Activated CD8-positive, alpha-beta T cell treated with anti-CD3 and anti-CD28 coated beads for 36 hours (primary cell): ENCODE measurements at regions of chr2 and their contacts with region 1.

Region 1: DNA sequence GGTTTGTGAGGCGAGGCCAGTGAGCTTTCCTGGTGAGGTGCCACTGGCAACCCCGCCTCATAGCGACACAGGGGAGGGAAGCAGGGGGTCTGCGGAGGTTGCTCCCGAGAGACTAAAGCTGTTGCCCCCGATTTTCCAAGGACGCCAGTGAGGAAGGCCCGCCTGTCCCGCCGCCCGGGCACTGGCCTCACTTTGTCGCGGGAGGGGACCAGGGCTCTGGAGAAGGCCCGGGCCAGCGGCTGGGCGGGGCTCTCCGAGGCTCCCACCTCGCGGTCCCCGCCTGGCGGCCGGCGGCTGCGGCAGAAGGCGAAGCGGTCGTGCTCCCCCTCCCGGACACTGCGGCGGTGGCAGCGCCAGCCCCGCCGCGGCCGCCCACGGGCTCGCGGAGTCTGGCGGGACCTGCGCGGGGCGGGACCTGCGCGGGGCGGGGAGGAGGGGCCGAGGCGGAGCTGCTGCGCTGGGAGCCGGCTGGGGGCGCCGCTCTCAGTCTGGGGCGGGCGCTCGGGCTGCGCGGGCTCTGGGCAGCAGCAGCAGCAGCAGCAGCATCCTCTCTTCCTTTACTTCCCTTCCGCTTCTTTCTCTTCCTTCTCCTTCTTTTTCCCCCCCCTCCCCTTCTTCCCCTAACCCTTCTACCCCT is at the start of gene MAP2:
- DNase-seq: peak; percentile 66
- ATAC-seq: peak; percentile 98
- H3K4me3 Mint-ChIP-seq: peak within 1 kb of the TSS; percentile 46
- H3K27ac Mint-ChIP-seq: no peak within 1 kb of the TSS
- H3K4me1 Mint-ChIP-seq: peaks cover 10% of the 10 kb centered on the region
- H3K27me3 Mint-ChIP-seq: peaks cover 21% of the 10 kb centered on the region
- CTCF ChIP-seq: peak; percentile 66
- total RNA-seq, gene MAP2: not detected

Region 2: DNA sequence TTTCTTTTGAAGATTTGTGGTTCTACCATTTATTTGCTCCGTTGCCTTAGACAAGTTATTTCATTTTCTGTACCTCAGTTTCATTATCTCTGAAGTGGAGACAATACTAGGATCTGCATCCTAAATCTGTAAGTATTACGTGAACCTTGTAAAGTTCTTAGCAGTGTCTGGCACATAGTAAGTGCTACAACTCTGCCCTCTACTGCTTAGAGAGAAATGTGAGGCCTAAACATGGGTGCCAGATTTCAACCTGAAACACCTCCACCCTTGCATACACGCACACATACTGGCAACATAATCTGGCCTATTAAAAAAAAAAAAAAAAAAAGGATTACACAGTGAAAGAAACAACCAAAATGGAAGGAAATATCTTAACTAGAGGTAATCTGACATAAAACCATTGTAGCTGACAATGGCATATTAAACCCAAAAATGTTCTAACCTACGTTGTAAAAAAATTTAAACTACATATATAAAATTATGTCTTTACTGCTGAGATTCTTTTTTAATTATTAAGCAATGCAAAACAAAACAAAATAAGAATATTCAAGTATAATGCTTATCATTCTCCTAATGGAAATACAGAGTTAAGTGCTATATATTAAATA is 132.8 kb after region 1 on chr2:
- CTCF ChIA-PET with region 1: no interaction called
- POLR2A ChIA-PET with region 1: no interaction called
- intact Hi-C with region 1: loop called (anchors 10 kb)
- DNase-seq: no peak
- ATAC-seq: peak; percentile 34
- H3K4me3 Mint-ChIP-seq: no peak overlapping the region
- H3K27ac Mint-ChIP-seq: no peak overlapping the region
- H3K4me1 Mint-ChIP-seq: no peaks in the 10 kb centered on the region
- H3K27me3 Mint-ChIP-seq: peaks cover 2% of the 10 kb centered on the region
- CTCF ChIP-seq: no peak